Caco-2 (cell line): ENCODE measurements at regions of chr14 and their contacts with region 1.

Region 1: DNA sequence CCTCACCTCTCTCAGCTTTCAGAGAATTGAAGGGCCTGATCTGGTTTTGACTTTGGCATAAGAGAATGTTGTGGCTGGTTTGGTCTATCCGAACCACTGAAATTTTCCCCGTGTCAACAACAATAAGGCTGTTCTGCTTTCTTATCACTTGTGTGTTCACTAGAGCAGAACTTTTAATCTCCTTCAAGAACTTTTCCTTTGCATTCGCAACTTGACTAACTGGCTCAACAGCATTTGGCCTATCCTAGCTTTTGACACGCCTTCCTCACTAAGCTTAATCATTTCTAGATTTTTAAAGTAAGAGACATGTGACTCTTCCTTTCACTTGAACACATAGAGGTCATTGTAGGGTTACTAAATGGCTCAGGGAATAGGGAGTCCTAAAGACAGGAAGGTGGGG is 25.9 kb upstream of the EDDM3A start:
- DNase-seq: peak; percentile 77 to 82
- H3K4me3 ChIP-seq: no peak overlapping the region
- H3K4me3 Mint-ChIP-seq: peak overlapping the region; percentile 72
- H3K27ac Mint-ChIP-seq: peak overlapping the region; percentile 92
- H3K4me1 ChIP-seq: peaks cover 23% of the 10 kb centered on the region
- H3K4me1 Mint-ChIP-seq: peaks cover 22% of the 10 kb centered on the region
- H3K27me3 ChIP-seq: no peaks in the 10 kb centered on the region
- H3K27me3 Mint-ChIP-seq: no peaks in the 10 kb centered on the region
- CTCF ChIP-seq: no peak

Region 2: GRCh38 chr14:20652996-20653975 is 66.5 kb before region 1 on chr14:
- CTCF ChIA-PET with region 1: no interaction called
- POLR2A ChIA-PET with region 1: no interaction called
- intact Hi-C with region 1: no loop called
- DNase-seq: no peak
- H3K4me3 ChIP-seq: no peak overlapping the region
- H3K4me3 Mint-ChIP-seq: no peak overlapping the region
- H3K27ac Mint-ChIP-seq: no peak overlapping the region
- H3K4me1 ChIP-seq: peaks cover 6% of the 10 kb centered on the region; the same call in 1 of the 2 replicates
- H3K4me1 Mint-ChIP-seq: peaks cover 12% of the 10 kb centered on the region
- H3K27me3 ChIP-seq: no peaks in the 10 kb centered on the region
- H3K27me3 Mint-ChIP-seq: no peaks in the 10 kb centered on the region
- CTCF ChIP-seq: no peak

Region 3: DNA sequence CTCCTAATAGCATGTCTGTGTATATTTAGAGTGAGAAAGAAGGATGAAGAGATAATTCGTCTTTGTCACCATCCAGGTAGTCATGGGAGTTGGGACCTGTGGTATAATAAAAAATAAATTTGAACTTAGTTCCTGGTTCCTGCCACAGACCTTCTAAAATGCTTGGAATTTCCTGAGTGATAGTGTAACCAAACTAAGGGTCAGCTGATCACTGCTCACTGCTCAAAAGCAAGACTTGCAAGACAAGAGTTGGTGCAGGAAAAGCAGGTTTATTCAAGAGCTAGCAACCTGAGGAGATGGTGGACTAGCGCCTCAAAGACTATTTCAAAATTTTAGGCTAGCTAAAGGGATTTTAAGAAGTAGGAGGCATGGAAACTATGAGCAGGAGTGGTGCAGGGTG is 12.2 kb before region 1 on chr14:
- CTCF ChIA-PET with region 1: no interaction called
- POLR2A ChIA-PET with region 1: no interaction called
- intact Hi-C with region 1: loop called (anchors 2 kb)
- DNase-seq: peak; percentile 56 to 71
- H3K4me3 ChIP-seq: no peak overlapping the region
- H3K4me3 Mint-ChIP-seq: peak overlapping the region; percentile 4
- H3K27ac Mint-ChIP-seq: peak overlapping the region; percentile 8
- H3K4me1 ChIP-seq: peaks cover 13% of the 10 kb centered on the region
- H3K4me1 Mint-ChIP-seq: no peaks in the 10 kb centered on the region
- H3K27me3 ChIP-seq: no peaks in the 10 kb centered on the region
- H3K27me3 Mint-ChIP-seq: no peaks in the 10 kb centered on the region
- CTCF ChIP-seq: no peak